ENCODE measurements at regions of chr22 and their contacts with region 1.

Region 1: GRCh38 chr22:30763815-30764686 is 69.4 kb downstream of the OSBP2 start:
- DNase-seq: peak; percentile 69 to 86
- H3K4me3 ChIP-seq: no peak overlapping the region
- H3K27ac ChIP-seq: 0 out of 2 replicates have a peak overlapping the region, but pooled peaks have one; percentile 19
- H3K4me1 ChIP-seq: peaks cover 8% of the 10 kb centered on the region
- H3K27me3 ChIP-seq: no peaks in the 10 kb centered on the region
- CTCF ChIP-seq: peak; percentile 94

Region 2: DNA sequence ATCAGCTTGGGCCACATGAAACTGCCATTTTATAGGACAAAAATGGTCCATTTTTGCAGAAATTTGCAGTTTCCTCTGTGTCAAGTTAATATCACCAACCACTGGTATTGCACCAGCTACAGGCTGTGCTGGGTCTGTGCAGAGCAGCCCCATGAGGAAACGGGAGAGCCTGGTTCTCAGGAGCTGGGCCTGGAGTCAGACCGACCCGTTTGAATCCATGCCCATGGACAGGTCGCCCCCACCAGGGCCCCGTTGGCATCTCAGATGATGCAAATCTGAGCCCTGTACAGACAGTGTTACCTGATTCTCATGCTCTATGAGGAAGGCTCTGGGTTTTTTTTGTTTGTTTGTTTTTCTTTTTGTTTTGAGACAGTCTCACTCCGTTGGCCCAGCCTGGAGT is 207.7 kb before region 1 on chr22:
- CTCF ChIA-PET with region 1: no interaction called
- POLR2A ChIA-PET with region 1: no interaction called
- intact Hi-C with region 1: no loop called
- DNase-seq: no peak
- H3K4me3 ChIP-seq: no peak overlapping the region
- H3K27ac ChIP-seq: no peak overlapping the region
- H3K4me1 ChIP-seq: peaks cover 6% of the 10 kb centered on the region
- H3K27me3 ChIP-seq: no peaks in the 10 kb centered on the region
- CTCF ChIP-seq: no peak; the same call in 1 of the 2 replicates

Region 3: GRCh38 chr22:30782613-30783012 is 18.6 kb after region 1 on chr22:
- CTCF ChIA-PET with region 1: interaction called, 10 read pairs
- POLR2A ChIA-PET with region 1: no interaction called
- intact Hi-C with region 1: no loop called
- DNase-seq: peak in 1 of 2 experiments; percentile 83
- H3K4me3 ChIP-seq: no peak overlapping the region
- H3K27ac ChIP-seq: peak overlapping the region; percentile 77
- H3K4me1 ChIP-seq: peaks cover 30% of the 10 kb centered on the region
- H3K27me3 ChIP-seq: no peaks in the 10 kb centered on the region
- CTCF ChIP-seq: no peak

Region 4: GRCh38 chr22:30830907-30831306 is 66.9 kb after region 1 on chr22:
- CTCF ChIA-PET with region 1: interaction called, 13 read pairs
- POLR2A ChIA-PET with region 1: no interaction called
- intact Hi-C with region 1: loop called (anchors 2 kb)
- DNase-seq: peak; percentile 84 to 98
- H3K4me3 ChIP-seq: no peak overlapping the region
- H3K27ac ChIP-seq: peak overlapping the region; percentile 98
- H3K4me1 ChIP-seq: peaks cover 44% of the 10 kb centered on the region
- H3K27me3 ChIP-seq: no peaks in the 10 kb centered on the region
- CTCF ChIP-seq: no peak

Region 5: DNA sequence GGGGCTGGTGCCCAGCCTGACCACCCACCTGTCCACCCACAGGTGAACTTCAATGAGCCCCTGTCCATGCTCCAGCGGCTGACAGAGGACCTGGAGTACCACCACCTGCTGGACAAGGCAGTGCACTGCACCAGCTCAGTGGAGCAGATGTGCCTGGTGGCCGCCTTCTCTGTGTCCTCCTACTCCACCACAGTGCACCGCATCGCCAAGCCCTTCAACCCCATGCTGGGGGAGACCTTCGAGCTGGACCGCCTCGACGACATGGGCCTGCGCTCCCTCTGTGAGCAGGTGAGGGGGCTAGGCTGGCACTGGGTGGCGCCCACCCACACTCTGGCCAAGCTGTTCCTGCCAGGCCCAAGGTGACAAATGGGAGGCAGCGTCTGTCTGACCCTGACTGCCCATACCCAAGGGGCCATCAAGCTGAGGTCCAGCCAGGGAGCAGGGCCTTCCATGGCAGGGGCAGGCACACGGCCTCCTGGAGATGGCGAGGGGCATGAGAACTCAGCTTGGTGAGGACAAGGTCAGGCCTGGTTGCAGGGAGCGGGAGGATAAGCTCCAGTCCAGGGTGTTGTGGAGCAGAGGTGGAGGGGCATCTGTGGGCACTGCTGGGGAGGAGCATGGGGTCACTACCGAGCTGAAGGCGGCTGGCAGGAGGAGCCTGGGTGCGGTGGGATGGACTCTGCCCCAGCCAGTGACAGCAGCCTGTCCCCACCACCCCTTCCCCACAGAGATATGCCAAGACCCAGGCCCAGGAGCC is 126.8 kb after region 1 on chr22:
- CTCF ChIA-PET with region 1: no interaction called
- POLR2A ChIA-PET with region 1: no interaction called
- intact Hi-C with region 1: loop called (anchors 1 kb)
- DNase-seq: peak; percentile 34 to 41
- H3K4me3 ChIP-seq: no peak overlapping the region
- H3K27ac ChIP-seq: no peak overlapping the region
- H3K4me1 ChIP-seq: no peaks in the 10 kb centered on the region
- H3K27me3 ChIP-seq: no peaks in the 10 kb centered on the region
- CTCF ChIP-seq: peak; percentile 88

Region 6: GRCh38 chr22:30920407-30920806 is 156.4 kb after region 1 on chr22:
- CTCF ChIA-PET with region 1: interaction called, 29 read pairs
- POLR2A ChIA-PET with region 1: no interaction called
- intact Hi-C with region 1: loop called (anchors 1 kb)
- DNase-seq: peak; percentile 46 to 74
- H3K4me3 ChIP-seq: no peak overlapping the region
- H3K27ac ChIP-seq: no peak overlapping the region
- H3K4me1 ChIP-seq: no peaks in the 10 kb centered on the region
- H3K27me3 ChIP-seq: no peaks in the 10 kb centered on the region
- CTCF ChIP-seq: peak; percentile 98